Mammary epithelial cell (primary cell): ENCODE measurements at regions of chr11 and their contacts with region 1.

Region 1: DNA sequence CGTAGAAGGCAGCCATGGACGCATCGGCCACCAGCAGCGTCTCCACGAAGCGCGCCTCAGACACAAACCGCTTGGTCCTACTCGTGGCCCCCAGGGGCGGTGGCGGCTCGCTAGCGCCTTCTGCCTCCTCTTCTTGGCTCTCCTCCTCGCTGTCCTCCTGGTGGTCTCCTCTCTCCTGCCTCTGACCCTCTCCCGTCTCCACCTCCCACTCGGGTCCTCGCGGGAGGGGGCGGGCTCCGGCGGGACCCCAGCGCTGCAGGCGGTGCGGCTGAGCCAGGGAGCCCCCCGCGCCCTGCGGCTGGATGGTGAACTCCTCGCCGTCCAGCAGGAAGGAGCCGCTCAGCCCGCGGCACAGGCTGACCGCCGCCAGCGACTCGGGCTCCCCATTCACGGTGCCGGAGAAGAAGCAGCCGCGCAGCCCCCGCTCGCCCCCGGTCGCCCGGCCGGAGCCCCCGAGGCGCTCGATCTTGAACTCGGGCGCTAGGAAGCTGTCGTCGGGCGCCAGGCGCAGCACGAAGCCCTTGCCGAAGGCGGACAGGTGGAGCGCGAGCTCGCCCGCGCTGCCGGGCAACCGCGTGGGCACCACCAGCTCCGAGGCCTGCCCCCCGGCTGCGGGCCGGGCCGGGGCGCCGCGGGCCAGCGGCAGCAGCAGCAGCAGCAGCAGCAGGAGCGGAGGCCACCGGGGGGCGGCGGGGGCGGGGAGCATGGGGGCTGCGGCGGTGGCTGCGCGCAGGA is 661 bp downstream of the ADAMTS8 start:
- DNase-seq: no peak
- H3K4me3 ChIP-seq: peak overlapping the region in 1 of 3 experiments; percentile 14
- H3K27ac ChIP-seq: no peak overlapping the region
- H3K4me1 ChIP-seq: peaks cover 9% of the 10 kb centered on the region
- H3K27me3 ChIP-seq: peaks cover 37% of the 10 kb centered on the region
- CTCF ChIP-seq: no peak

Region 2: DNA sequence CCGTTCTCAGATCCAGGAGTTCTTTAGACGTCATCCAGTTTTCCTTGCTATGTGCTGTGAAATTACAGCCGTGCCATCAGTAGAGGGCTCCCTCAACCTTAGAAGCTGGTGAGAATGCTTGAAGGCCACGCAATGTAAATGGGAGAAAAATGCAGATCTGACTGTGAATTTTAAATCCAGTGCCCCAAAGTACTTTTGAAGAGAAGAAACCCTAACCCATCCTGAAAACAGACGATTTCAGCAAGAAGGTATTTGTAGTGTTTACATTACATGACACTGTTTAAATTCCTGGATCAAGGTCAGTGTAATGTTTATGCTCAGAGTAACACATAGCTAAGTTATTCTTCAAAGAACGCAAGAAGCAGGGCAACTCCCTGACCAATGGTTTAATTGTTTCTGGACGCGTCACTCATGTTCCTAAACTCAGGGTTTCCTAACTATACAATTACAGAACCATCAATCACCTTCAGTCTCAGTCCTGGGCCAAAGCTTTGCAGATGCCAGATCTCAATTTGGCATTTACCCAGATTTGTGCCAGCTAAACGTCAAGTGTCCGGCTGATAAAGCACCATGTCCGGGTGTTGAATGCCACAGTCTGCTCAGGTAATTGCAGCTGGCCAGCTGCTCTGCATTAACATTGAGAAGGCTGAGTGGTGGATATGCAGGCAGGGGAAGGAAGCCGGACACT is 37.5 kb before region 1 on chr11:
- CTCF ChIA-PET with region 1: interaction called, 4 read pairs
- dilution Hi-C with region 1: no loop called
- in situ Hi-C with region 1: no loop called
- intact Hi-C with region 1: loop called (anchors 1 kb)
- DNase-seq: peak; percentile 48
- H3K4me3 ChIP-seq: no peak overlapping the region
- H3K27ac ChIP-seq: no peak overlapping the region
- H3K4me1 ChIP-seq: no peaks in the 10 kb centered on the region
- H3K27me3 ChIP-seq: peaks cover 6% of the 10 kb centered on the region
- CTCF ChIP-seq: peak; percentile 21 to 71

Region 3: GRCh38 chr11:130749216-130749615 is 321.5 kb after region 1 on chr11:
- CTCF ChIA-PET with region 1: no interaction called
- dilution Hi-C with region 1: no loop called
- in situ Hi-C with region 1: no loop called
- intact Hi-C with region 1: no loop called
- DNase-seq: no peak
- H3K4me3 ChIP-seq: no peak overlapping the region
- H3K27ac ChIP-seq: no peak overlapping the region
- H3K4me1 ChIP-seq: no peaks in the 10 kb centered on the region
- H3K27me3 ChIP-seq: no peaks in the 10 kb centered on the region
- CTCF ChIP-seq: no peak

Region 4: GRCh38 chr11:130894322-130895025 is 466.7 kb after region 1 on chr11:
- CTCF ChIA-PET with region 1: interaction called, 4 read pairs
- dilution Hi-C with region 1: no loop called
- in situ Hi-C with region 1: loop called in 1 of 2 experiments (anchors 10 kb)
- intact Hi-C with region 1: loop called (anchors 1 kb)
- DNase-seq: peak; percentile 46
- H3K4me3 ChIP-seq: no peak overlapping the region
- H3K27ac ChIP-seq: no peak overlapping the region
- H3K4me1 ChIP-seq: peaks cover 18% of the 10 kb centered on the region
- H3K27me3 ChIP-seq: no peaks in the 10 kb centered on the region
- CTCF ChIP-seq: peak; percentile 86 to 98